A549 (cell line): ENCODE measurements at regions of chr10 and their contacts with region 1.

Region 1: GRCh38 chr10:12710594-12711349 is 290.7 kb downstream of the CCDC3 start:
- DNase-seq: peak; percentile 70 to 84
- ATAC-seq: peak; percentile 57 to 67; a peak in 5 of 6 replicates
- H3K4me3 ChIP-seq: no peak overlapping the region
- H3K27ac ChIP-seq: peak overlapping the region; percentile 82 to 94
- H3K4me1 ChIP-seq: peaks cover 55% of the 10 kb centered on the region
- CTCF ChIP-seq: peak; percentile 92
- EP300 ChIP-seq: no peak; a peak in 1 of 5 replicates
- POLR2A ChIP-seq: no peak
- RAD21 ChIP-seq: peak; percentile 96

Region 2: DNA sequence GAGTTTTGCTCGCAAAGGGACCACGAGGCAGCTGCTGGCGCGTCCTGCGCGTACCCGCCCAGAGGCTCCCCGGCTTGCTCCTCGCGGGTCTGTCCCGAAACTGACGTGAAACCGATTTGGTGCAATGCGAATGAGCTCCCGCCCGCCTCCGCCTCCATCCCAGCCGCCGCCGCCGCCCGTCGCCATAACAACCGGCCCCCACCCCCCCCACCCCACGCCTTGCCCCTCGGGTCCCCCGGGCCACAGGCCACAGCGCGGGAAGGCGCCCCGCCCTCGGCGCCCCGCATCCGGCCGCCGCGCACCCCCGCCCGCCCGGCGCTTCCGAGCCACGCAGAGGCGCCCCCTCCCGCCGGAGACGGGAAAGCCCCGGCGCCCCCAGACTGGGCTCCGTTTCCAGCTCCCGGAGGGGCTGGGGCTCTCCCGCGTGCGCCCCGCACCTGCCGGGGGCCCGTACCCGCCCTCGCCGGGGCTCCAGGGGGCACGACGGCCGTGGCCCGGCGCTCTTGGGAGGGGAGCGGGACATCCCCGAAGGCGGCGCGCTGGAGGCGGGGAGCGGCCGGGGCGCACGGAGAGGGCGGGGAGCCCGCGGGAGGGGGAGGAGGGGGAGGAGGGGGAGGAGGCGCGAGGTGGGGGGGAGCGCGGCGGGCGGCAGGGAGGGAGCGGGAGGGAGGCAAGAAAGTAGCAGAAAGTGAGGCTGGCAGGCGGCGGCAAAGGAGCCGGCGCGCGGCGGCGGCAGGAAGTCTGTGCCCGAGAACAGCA is 361.7 kb before region 1 on chr10 and contains the start of gene CAMK1D:
- CTCF ChIA-PET with region 1: interaction called, 23 read pairs
- POLR2A ChIA-PET with region 1: interaction called, 6 read pairs
- DNase-seq: peak; percentile 60 to 74
- ATAC-seq: peak; percentile 64 to 74
- H3K4me3 ChIP-seq: peak within 1 kb of the TSS; percentile 89
- H3K27ac ChIP-seq: peak within 1 kb of the TSS; percentile 98 to 99
- H3K4me1 ChIP-seq: peaks cover 22% of the 10 kb centered on the region
- CTCF ChIP-seq: peak; percentile 59
- EP300 ChIP-seq: no peak
- POLR2A ChIP-seq: peak; percentile 28
- RAD21 ChIP-seq: peak in 1 of 2 experiments; percentile 66; a peak in 3 of 5 replicates
- polyA plus RNA-seq, gene CAMK1D: 12.5 and 15.0 TPM in 2 replicates

Region 3: GRCh38 chr10:12500381-12501303 is 210.1 kb before region 1 on chr10:
- CTCF ChIA-PET with region 1: no interaction called
- POLR2A ChIA-PET with region 1: no interaction called
- DNase-seq: no peak
- ATAC-seq: no peak
- H3K4me3 ChIP-seq: no peak overlapping the region
- H3K27ac ChIP-seq: no peak overlapping the region
- H3K4me1 ChIP-seq: peaks cover 10% of the 10 kb centered on the region; the same call in 2 of the 3 replicates
- CTCF ChIP-seq: no peak
- EP300 ChIP-seq: no peak
- POLR2A ChIP-seq: no peak
- RAD21 ChIP-seq: no peak

Region 4: GRCh38 chr10:12635127-12635541 is 75.6 kb before region 1 on chr10:
- CTCF ChIA-PET with region 1: interaction called, 13 read pairs
- POLR2A ChIA-PET with region 1: interaction called, 4 read pairs
- DNase-seq: peak; percentile 32 to 82
- ATAC-seq: peak; percentile 26 to 51; a peak in 4 of 6 replicates
- H3K4me3 ChIP-seq: 0 out of 3 replicates have a peak overlapping the region, but pooled peaks have one; percentile 6
- H3K27ac ChIP-seq: peak overlapping the region; percentile 65 to 87
- H3K4me1 ChIP-seq: peaks cover 67% of the 10 kb centered on the region
- CTCF ChIP-seq: no peak
- EP300 ChIP-seq: no peak
- POLR2A ChIP-seq: no peak
- RAD21 ChIP-seq: no peak

Region 5: GRCh38 chr10:12733271-12733670 is 22.5 kb after region 1 on chr10:
- CTCF ChIA-PET with region 1: no interaction called
- POLR2A ChIA-PET with region 1: no interaction called
- DNase-seq: no peak
- ATAC-seq: no peak
- H3K4me3 ChIP-seq: no peak overlapping the region
- H3K27ac ChIP-seq: no peak overlapping the region
- H3K4me1 ChIP-seq: no peaks in the 10 kb centered on the region
- CTCF ChIP-seq: no peak
- EP300 ChIP-seq: no peak
- POLR2A ChIP-seq: no peak
- RAD21 ChIP-seq: no peak

Region 6: DNA sequence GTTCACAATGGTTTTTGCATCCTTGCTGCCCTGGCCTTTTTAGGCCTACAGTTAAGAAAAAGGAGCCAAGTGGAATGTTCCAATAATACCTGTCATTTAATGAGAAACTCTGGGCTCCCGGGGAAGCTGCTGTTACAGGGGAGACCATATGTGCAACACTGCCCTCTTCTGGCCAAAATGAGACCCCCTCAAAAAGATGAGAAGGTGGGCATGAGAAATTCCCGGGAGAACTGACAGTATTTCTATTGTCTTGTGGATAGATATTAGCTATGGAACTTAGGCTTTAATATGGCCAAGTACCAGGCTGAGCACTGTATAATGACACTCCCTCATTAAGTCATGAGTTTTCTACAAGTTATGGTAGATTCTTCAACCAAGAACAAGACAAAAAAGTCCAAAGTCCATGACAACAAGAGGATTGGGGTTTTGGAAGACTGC is 191.4 kb after region 1 on chr10:
- CTCF ChIA-PET with region 1: interaction called, 55 read pairs
- POLR2A ChIA-PET with region 1: no interaction called
- DNase-seq: peak; percentile 61 to 63
- ATAC-seq: peak; percentile 56 to 76; a peak in 3 of 6 replicates
- H3K4me3 ChIP-seq: no peak overlapping the region
- H3K27ac ChIP-seq: no peak overlapping the region
- H3K4me1 ChIP-seq: no peaks in the 10 kb centered on the region
- CTCF ChIP-seq: peak; percentile 80
- EP300 ChIP-seq: no peak
- POLR2A ChIP-seq: no peak
- RAD21 ChIP-seq: peak; percentile 81 to 82

Region 7: DNA sequence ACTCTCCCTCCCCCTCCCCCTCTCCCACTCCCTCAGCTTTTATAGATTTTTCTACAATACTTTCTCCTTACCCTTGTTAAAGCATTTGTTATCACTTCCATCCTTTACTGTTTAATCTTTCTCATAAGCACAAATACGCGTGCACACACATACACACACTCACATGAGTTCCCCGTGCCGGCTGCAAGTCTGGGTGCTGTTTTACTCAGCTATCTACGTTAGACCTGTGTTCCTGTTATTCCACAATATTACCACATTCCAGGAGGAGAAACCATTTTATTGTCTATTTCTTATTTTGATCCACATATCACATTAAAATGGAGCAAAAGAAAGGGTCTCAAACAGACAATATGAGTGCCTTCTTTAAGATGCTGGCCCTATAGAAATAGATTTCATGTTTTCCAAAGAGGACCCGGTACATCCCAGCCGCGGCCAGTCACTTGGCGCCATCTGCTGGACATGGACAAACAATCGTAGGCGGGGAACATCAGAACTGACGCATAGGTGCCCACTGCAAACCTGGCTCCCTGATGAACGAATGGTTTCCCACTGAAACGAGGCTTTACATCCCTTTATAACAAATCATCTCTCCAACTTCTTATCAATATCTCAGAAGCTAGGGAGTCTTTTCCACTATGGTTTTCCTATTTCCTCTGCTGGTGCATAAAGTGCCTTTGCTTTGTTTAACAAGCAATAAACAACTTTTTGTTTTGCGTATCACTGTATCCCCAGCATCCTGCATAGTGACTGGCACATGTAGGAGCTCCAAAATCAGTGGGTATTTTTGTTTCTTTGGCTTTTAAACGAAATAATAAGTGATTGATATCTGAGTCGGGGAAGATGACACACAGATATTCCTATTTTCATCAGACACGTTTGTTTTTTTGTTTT is 364.0 kb after region 1 on chr10:
- CTCF ChIA-PET with region 1: interaction called, 35 read pairs
- POLR2A ChIA-PET with region 1: no interaction called
- DNase-seq: peak; percentile 76 to 81
- ATAC-seq: peak; percentile 99 to 100
- H3K4me3 ChIP-seq: no peak overlapping the region
- H3K27ac ChIP-seq: no peak overlapping the region
- H3K4me1 ChIP-seq: no peaks in the 10 kb centered on the region; the same call in 2 of the 3 replicates
- CTCF ChIP-seq: peak; percentile 91
- EP300 ChIP-seq: no peak
- POLR2A ChIP-seq: no peak
- RAD21 ChIP-seq: peak; percentile 95 to 96